A549 (cell line): ENCODE measurements at regions of chr5 and their contacts with region 1.

Region 1: DNA sequence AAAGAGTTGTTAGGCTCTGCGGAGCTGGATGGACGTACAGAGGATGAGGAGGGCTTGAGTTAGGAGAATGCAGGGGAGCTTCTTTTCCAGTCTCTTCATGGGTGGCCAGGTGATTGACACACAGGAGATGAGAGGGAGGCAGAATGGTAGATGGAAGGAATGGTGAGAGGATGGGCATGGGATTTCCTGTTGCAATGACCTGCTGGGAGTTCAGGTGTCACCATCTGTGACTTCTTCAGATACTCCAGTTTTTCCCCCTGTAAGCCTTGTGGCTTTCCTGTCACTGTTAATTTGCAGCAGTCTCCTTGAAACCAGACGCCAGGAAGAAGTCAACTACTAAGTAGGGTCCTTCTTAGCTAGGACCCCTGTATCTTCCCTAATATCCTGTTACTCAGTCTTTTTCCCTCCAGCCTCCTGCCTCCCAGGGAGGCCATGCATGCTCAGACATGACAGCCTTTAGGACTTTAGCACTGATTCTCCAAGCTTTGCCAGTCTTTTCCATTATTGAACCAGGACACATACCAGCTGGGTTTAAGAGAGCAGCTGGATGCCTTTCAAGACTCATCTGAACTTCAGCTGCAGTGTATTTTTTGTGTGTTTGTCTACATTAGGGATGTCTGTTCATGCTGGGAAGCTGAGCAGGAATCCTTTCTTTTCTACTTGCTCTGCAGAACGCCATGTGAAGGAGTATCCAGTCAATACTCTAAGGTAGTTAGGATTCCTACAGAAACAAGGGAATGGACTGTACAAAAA is 67.2 kb upstream of the CD180 start:
- DNase-seq: no peak
- ATAC-seq: no peak
- H3K4me3 ChIP-seq: no peak overlapping the region
- H3K27ac ChIP-seq: peak overlapping the region in 1 of 2 experiments; percentile 1; a peak in 1 of 6 replicates
- H3K4me1 ChIP-seq: peaks cover 17% of the 10 kb centered on the region
- CTCF ChIP-seq: no peak
- EP300 ChIP-seq: no peak
- POLR2A ChIP-seq: no peak
- RAD21 ChIP-seq: no peak

Region 2: GRCh38 chr5:66939094-66939493 is 324.7 kb before region 1 on chr5:
- CTCF ChIA-PET with region 1: no interaction called
- POLR2A ChIA-PET with region 1: no interaction called
- DNase-seq: no peak
- ATAC-seq: no peak
- H3K4me3 ChIP-seq: no peak overlapping the region
- H3K27ac ChIP-seq: no peak overlapping the region
- H3K4me1 ChIP-seq: no peaks in the 10 kb centered on the region
- CTCF ChIP-seq: no peak
- EP300 ChIP-seq: no peak
- POLR2A ChIP-seq: no peak
- RAD21 ChIP-seq: no peak

Region 3: DNA sequence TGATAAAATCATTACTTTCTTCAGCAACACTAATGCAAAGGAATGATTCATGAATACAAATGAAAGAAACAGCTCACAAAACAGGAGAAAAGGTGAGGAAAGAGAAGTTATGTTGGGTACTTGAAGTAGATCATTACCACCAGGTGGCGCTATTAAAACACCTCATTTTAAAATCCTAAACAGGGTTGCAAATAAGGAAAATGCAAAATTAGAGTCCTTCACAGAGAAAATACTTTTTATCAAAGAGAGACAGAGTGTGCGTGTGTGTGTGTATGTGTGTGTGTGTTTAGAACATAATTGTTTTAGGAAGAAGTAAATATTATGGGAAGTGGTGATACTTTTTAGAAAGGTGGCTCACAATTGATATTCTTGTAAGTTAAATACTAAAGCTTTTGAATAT is 17.7 kb before region 1 on chr5:
- CTCF ChIA-PET with region 1: interaction called, 21 read pairs
- POLR2A ChIA-PET with region 1: no interaction called
- DNase-seq: peak; percentile 5 to 71
- ATAC-seq: peak; percentile 54 to 72; a peak in 4 of 6 replicates
- H3K4me3 ChIP-seq: no peak overlapping the region
- H3K27ac ChIP-seq: peak overlapping the region in 1 of 2 experiments; percentile 18; a peak in 1 of 6 replicates
- H3K4me1 ChIP-seq: no peaks in the 10 kb centered on the region
- CTCF ChIP-seq: peak; percentile 88
- EP300 ChIP-seq: no peak
- POLR2A ChIP-seq: no peak
- RAD21 ChIP-seq: peak; percentile 82 to 91

Region 4: GRCh38 chr5:67331296-67331925 is 67.6 kb after region 1 on chr5:
- CTCF ChIA-PET with region 1: no interaction called
- POLR2A ChIA-PET with region 1: no interaction called
- DNase-seq: no peak
- ATAC-seq: no peak
- H3K4me3 ChIP-seq: no peak overlapping the region
- H3K27ac ChIP-seq: no peak overlapping the region
- H3K4me1 ChIP-seq: no peaks in the 10 kb centered on the region
- CTCF ChIP-seq: no peak
- EP300 ChIP-seq: no peak
- POLR2A ChIP-seq: no peak
- RAD21 ChIP-seq: no peak